ENCODE measurements at regions of chr2 and their contacts with region 1.

Region 1: DNA sequence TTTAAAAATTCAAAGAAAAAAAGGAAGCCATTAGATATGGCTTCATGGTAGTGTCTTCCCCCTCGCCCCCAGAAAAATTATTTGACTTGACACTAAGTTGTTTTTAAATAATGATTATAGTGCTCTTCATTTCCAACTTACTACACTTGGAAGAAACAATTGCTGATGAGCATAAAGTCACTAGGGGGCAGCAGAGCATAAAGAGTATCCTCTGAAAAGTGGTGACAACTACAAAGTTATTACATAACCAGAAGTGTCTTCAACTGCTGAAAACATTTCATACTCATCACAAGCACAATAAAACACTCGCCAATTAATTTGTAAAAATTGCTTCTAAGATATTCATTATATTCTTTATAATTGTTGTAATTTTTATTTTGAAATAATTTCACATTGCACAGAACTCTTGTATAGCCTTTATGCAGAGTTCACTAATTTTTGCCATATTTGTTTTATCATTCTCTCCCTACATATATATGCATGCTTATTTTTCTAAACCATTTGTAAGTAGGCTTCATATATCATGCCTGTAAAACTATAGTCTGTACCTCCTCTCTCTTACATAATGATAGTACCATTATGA is 54.9 kb downstream of the EXOC6B start:
- DNase-seq: peak in 1 of 2 donors; percentile 75
- H3K4me3 ChIP-seq: no peak overlapping the region
- H3K27ac ChIP-seq: no peak overlapping the region
- H3K4me1 ChIP-seq: no peaks in the 10 kb centered on the region
- H3K27me3 ChIP-seq: no peaks in the 10 kb centered on the region
- CTCF ChIP-seq: peak; percentile 72 to 85 (median 83)

Region 2: GRCh38 chr2:72173640-72174321 is 597.2 kb before region 1 on chr2:
- intact Hi-C with region 1: no loop called
- DNase-seq: no peak
- H3K4me3 ChIP-seq: no peak overlapping the region
- H3K27ac ChIP-seq: no peak overlapping the region
- H3K4me1 ChIP-seq: no peaks in the 10 kb centered on the region
- H3K27me3 ChIP-seq: no peaks in the 10 kb centered on the region
- CTCF ChIP-seq: no peak

Region 3: DNA sequence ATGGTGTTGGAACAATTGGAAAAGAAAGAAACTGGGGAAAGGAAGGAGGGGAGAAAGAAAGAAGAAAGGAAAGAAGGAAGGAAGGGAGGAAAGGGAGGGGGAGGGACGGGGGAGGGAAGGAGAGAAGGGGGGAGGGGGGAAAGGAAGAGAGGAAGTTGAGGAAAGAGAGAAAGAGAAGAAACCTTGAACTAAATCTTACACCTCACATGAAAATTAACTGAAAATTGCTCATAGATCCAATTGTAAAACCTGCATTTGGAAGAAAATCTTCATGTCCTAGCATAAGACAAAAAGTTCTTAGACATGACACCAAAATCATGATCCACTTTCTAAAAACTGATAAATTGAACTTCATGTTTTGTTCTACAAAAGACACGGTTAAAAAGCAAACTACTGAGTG is 109.0 kb before region 1 on chr2:
- intact Hi-C with region 1: no loop called
- DNase-seq: no peak
- H3K4me3 ChIP-seq: no peak overlapping the region
- H3K27ac ChIP-seq: no peak overlapping the region
- H3K4me1 ChIP-seq: no peaks in the 10 kb centered on the region
- H3K27me3 ChIP-seq: no peaks in the 10 kb centered on the region
- CTCF ChIP-seq: no peak

Region 4: GRCh38 chr2:72825241-72826155 is 54.5 kb after region 1 on chr2 and contains the start of gene EXOC6B:
- intact Hi-C with region 1: loop called (anchors 10 kb)
- DNase-seq: peak; percentile 58 to 94
- H3K4me3 ChIP-seq: peak within 1 kb of the TSS; percentile 75 to 77
- H3K27ac ChIP-seq: peak within 1 kb of the TSS; percentile 70 to 75
- H3K4me1 ChIP-seq: peaks cover 0 to 4% of the 10 kb centered on the region in 2 donors
- H3K27me3 ChIP-seq: no peaks in the 10 kb centered on the region
- CTCF ChIP-seq: peak in 1 of 3 experiments; percentile 14
- total RNA-seq, gene EXOC6B: 32.4 TPM

Measured in ascending aorta (tissue), 2 donors.